HAP-1 (cell line): ENCODE measurements at regions of chr14 and their contacts with region 1.

Region 1: DNA sequence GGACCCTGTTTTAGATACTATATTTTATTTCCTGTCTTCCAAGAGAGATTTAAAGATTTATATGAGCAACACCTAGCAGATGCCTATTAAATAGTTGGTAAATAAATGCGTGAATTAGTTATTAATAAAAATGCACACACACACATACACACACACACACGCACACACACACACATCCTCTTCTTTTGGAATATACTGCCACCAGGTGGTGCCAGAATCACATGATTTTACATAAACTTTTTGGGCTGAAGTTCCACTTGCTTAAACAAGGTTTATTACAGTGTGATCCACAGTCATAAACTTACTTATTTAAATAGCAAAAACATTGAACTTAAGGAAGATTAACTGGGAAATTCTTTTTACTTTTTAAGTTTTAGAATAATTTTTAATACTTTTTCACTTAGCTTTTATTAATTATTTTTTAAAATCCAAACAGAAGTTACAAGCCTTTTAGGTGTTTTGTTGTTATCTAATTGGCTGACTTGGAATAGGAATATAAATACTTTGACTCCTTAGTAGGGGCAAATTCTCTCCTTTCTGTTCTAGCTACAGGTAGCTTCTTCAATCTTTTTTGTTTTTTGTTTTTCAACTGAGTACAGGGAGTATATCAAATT is 17.5 kb downstream of the RAD51B start:
- DNase-seq: peak; percentile 46 to 68
- H3K4me3 ChIP-seq: no peak overlapping the region
- H3K4me1 ChIP-seq: no peaks in the 10 kb centered on the region
- H3K27me3 ChIP-seq: no peaks in the 10 kb centered on the region

Region 2: DNA sequence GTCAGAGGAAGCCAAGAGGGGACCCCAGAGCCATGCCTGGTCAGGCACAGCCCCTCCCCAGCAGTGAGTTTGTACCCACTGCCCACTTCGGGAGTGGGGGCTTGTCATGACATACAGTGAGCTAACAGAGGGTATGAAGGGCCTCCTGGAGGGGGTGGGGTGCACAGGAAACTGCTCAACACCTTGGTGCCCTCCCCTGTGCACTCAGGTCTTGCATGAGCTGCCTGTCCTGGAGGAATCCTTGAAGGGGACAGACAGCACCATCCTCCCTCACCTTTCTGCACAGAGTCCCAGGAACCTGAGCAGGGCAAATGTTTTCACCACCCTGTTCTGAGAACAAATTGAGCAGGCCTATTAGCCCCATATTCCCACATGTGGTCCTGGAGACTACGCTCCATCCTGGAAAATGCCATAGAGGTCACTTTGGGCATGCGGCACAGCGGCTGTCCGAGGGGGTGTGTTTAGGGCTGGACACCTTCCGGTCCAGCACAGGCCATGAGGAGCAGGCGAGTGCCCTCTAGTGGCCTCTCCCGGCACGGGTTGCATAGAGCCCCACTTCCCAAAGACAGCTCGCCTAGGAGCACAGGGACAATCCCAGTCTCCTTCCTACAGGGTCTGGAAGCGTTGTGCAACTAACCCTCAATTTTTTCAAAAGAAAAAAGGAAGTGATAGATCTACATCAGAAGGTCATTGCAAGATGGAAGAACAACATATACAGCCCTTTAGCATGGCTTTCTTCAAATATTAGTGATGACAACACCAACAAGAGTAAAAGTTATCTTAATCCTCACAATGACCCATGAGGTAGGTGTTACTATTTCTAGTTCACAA is 987.6 kb after region 1 on chr14:
- in situ Hi-C with region 1: loop called (anchors 10 kb)
- DNase-seq: peak; percentile 76 to 95
- H3K4me3 ChIP-seq: no peak overlapping the region
- H3K4me1 ChIP-seq: peaks cover 3% of the 10 kb centered on the region
- H3K27me3 ChIP-seq: no peaks in the 10 kb centered on the region